HEK293 (cell line): ENCODE measurements at regions of chrX and their contacts with region 1.

Region 1: DNA sequence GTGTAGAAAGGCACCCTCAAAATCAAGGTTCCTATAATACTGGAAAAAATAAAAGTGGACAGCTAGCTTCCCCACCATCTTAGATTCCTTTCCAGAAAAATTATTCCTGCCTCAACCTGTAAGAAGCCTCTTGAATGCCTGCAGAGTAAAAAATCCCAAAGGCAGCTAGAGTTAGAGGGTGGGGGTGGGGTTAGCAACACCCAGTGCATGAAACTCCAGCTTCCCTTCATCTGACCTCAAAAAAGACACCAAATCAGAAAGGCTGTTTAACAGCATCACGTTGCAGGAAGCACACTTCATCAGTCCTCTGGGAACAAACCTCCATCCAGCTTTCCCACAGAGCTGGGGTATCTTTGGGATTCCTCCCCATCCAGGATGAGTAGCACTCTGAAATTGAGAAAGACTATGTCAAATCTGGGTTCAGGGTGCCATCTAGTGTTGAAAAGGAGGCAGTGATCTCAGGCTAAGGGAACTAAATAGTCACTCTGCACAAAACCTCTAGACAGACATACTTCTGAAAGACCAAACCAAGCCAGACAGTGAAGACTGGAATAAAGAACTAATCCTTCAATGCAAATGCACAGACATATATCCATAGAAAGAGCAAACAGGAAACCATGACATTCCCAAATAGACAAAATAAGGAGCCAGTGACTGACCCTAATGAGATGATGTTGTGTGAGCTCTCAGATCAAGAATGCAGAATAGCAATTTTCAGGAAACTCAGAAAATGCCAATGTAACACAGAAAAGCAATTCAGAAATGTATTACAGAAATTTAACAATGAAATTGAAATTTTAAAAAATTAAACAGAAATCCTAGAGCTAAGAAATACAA is 97.9 kb downstream of the ARHGEF9 start:
- H3K4me3 ChIP-seq: no peak overlapping the region
- H3K27ac ChIP-seq: no peak overlapping the region
- H3K4me1 ChIP-seq: no peaks in the 10 kb centered on the region
- CTCF ChIP-seq: 0 out of 2 replicates have a peak, but pooled peaks have one; percentile 38

Region 2: DNA sequence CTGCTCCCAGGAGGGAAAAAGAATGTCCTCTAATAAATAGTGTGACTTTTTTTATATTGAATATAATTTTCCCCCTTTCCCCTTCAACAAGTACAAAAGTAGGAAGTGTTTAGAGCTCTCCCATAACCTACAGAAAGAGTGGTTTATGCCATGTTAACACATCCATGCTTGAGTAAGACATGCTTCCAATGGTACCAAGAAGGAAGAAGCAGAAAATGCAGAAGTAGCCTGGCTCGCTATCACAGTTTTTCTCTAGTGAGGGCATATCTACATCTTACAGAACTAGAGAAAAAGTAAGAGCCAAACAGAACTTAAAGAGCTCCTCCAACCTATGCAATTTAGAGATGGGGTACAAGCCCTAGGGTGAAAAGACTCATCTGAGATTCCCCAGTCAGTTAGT is 15.5 kb after region 1 on chrX:
- CTCF ChIA-PET with region 1: interaction called, 11 read pairs
- POLR2A ChIA-PET with region 1: no interaction called
- H3K4me3 ChIP-seq: no peak overlapping the region
- H3K27ac ChIP-seq: no peak overlapping the region
- H3K4me1 ChIP-seq: no peaks in the 10 kb centered on the region
- CTCF ChIP-seq: no peak